Activated CD4-positive, alpha-beta T cell treated with anti-CD3 and anti-CD28 coated beads, Interleukin-2, amount 10 ng/mL, durations not matched to agents 24 days and 14 days (primary cell): ENCODE measurements at regions of chr6 and their contacts with region 1.

Region 1: DNA sequence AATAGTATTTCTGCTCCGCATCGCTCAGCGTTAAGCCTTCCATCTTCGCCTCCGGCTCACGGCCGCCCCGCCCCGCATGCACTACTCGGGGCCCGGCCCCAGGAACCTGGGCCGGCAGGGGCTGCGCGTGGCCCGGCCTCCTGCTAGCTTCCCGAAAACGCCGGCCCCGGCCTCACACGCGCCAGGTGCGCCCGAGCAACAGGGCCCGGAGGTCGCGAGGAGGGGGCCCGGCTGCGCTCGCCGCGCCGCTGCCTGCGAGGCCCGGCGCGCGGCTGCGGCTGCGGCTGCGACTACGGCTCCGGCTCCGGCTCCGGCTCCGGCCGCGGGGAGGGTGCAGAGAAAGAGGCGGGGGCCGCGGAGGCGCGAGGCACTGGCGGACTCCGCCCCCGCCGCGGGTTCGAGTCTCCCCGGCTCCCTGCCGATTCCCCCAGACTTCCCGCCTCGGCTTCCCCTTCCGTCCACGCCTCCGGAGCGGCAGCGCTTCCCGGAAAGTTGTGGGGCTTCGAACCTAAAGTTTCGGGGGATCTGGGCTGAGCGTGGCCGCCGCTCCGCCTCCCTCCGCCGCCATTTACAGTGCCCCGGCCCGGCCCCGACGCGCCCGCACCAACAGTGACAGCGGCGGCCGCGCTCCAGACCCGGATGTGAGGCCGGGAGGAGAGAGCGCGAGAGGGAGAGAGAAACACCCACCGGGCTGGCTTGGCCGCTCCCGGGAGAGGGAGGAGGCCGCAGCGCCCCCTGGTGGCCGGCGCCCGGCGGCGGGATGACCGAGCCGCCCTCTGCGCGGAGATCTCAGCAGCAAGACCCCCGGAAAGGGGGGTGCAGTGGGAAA is at the start of gene REPS1:
- DNase-seq: peak; percentile 98
- H3K4me3 Mint-ChIP-seq: peak within 1 kb of the TSS; percentile 91
- H3K27ac Mint-ChIP-seq: peak within 1 kb of the TSS; percentile 97
- H3K4me1 Mint-ChIP-seq: peaks cover 19% of the 10 kb centered on the region
- H3K27me3 Mint-ChIP-seq: peaks cover under 1% of the 10 kb centered on the region
- total RNA-seq, gene REPS1: 65.8 and 70.1 TPM in 2 replicates

Region 2: GRCh38 chr6:138773177-138774091 is 214.4 kb before region 1 on chr6 and contains the start of gene CCDC28A:
- intact Hi-C with region 1: loop called (anchors 1 kb)
- DNase-seq: peak; percentile 97
- H3K4me3 Mint-ChIP-seq: peak within 1 kb of the TSS; percentile 93
- H3K27ac Mint-ChIP-seq: peak within 1 kb of the TSS; percentile 99
- H3K4me1 Mint-ChIP-seq: peaks cover 20% of the 10 kb centered on the region
- H3K27me3 Mint-ChIP-seq: no peaks in the 10 kb centered on the region
- total RNA-seq, gene CCDC28A: 17.5 and 19.2 TPM in 2 replicates

Region 3: DNA sequence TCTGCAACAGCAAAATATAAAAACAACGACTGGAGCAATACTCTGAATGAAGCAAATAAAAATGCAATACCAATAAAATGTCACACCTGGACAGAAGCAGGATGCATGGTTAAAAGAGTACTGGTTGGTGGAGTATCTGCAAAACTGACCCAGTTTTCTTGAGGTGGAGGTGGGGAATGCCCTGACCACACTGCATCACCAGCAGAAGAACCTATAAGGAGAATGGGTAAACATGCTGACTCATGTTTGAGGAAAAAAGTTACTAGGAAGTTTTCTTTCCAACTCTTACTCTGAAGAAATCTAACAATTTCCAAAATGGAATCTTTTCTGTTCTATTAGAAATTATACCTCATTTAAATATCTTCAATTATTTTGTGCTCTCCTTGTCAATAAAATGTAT is 43.4 kb before region 1 on chr6:
- intact Hi-C with region 1: loop called (anchors 1 kb)
- DNase-seq: peak; percentile 69
- H3K4me3 Mint-ChIP-seq: no peak overlapping the region
- H3K27ac Mint-ChIP-seq: peak overlapping the region; percentile 45
- H3K4me1 Mint-ChIP-seq: peaks cover 40% of the 10 kb centered on the region
- H3K27me3 Mint-ChIP-seq: peaks cover 2% of the 10 kb centered on the region

Region 4: GRCh38 chr6:139109558-139109957 is 121.7 kb after region 1 on chr6:
- intact Hi-C with region 1: loop called (anchors 5 kb)
- DNase-seq: peak; percentile 69
- H3K4me3 Mint-ChIP-seq: no peak overlapping the region
- H3K27ac Mint-ChIP-seq: no peak overlapping the region
- H3K4me1 Mint-ChIP-seq: peaks cover 26% of the 10 kb centered on the region
- H3K27me3 Mint-ChIP-seq: no peaks in the 10 kb centered on the region